Activated CD4-positive, alpha-beta memory T cell treated with anti-CD3 and anti-CD28 coated beads, Interleukin-2, amount 10 ng/mL, durations not matched to agents 7 days and 5 days (primary cell): ENCODE measurements at regions of chr3 and their contacts with region 1.

Region 1: DNA sequence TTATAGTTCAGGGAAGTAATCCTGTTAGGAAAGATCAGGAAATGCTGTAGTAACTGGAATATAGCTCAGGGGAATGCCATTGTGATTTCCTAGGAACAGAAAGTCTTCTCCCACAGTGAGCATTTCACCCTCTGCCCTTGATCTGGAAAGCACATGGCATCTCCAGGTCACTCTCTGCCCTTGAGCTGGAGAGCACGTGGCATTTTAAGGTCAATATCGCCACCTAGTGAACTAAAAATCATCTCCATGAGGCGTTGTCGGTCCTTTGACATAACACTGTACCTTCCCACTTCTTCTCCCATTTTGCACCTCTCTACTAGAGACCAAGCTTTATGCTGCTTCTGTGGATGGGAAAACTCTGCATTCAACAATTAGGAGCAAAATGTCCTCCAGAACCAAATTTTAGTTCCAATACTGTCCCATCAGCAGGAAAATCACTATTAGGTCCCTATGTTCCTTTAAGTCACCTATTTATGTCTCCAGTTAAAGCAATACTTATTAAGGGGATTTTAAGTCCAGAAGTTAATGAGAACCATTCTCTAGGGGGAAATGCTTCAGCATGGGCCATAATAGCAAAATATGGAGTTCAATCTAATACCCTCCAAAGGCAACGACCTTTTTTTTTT is 54.7 kb upstream of the GK5 start:
- DNase-seq: peak; percentile 46
- H3K4me3 Mint-ChIP-seq: no peak overlapping the region
- H3K27ac Mint-ChIP-seq: no peak overlapping the region
- H3K4me1 Mint-ChIP-seq: peaks cover 52% of the 10 kb centered on the region
- H3K27me3 Mint-ChIP-seq: no peaks in the 10 kb centered on the region

Region 2: DNA sequence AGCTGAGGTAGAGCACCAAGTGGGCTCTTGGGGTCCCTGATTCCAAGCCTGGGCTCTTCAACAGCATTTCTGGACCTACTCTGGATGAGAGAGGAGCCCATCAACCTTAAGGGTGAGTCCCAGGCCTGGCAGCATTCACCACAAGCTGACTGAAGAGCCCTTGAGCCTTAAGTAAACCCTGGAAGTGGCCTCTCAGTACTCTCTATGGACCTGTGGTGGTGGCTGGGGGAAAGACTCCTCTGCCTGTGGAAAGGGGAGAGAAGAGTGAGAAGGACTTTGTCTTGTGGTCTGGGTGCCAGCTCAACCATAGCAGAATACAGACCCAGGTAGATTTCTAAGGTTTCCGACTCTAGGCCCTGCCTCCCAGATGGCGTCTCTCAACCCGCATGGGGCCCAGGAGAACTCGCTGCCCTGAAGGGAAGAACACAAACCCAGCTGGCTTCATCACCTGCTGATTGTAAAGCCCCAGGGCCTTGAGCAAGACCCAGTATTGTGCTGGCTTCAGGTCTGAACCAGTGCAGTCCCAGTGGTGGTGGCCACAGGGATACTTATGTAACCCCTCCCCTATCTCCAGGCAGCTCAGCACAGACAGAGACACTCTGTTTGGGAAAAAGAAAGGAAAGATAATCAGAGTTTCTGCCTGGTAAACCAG is 202.1 kb before region 1 on chr3:
- CTCF ChIA-PET with region 1: no interaction called
- POLR2A ChIA-PET with region 1: no interaction called
- DNase-seq: no peak
- H3K4me3 Mint-ChIP-seq: no peak overlapping the region
- H3K27ac Mint-ChIP-seq: no peak overlapping the region
- H3K4me1 Mint-ChIP-seq: no peaks in the 10 kb centered on the region
- H3K27me3 Mint-ChIP-seq: no peaks in the 10 kb centered on the region

Region 3: DNA sequence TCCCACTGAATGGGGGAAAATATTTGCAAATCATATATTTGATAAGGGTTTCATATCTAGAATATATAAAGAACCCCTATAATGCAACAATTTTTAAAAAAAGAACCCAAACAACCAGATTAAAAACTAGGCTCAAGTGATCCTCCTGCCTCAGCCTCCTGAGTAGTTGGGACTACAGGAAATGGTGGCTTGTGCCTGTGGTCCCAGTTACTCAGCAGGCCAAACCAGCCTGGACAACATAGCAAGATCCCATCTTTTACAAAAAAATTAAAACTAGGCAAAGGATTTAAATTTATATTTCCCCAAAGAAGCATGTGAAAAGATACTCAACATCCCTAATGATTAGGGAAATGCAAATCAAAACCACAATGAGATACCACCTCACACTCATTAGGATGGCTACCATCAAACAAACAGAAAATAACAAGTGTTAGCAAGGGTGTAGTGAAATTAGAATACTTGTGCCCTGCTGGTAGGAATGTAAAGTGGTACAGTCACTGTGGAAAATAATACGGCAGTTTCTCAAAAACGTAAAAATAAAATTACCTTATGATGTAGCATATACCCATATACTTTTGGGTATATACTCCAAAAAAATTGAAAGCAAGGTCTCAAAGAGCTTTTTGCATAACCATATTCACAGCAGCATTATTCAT is 150.4 kb before region 1 on chr3:
- CTCF ChIA-PET with region 1: interaction called, 32 read pairs
- POLR2A ChIA-PET with region 1: interaction called, 4 read pairs
- DNase-seq: no peak
- H3K4me3 Mint-ChIP-seq: no peak overlapping the region
- H3K27ac Mint-ChIP-seq: no peak overlapping the region
- H3K4me1 Mint-ChIP-seq: peaks cover 2% of the 10 kb centered on the region
- H3K27me3 Mint-ChIP-seq: no peaks in the 10 kb centered on the region

Region 4: GRCh38 chr3:142180761-142181362 is 99.2 kb before region 1 on chr3:
- CTCF ChIA-PET with region 1: interaction called, 26 read pairs
- POLR2A ChIA-PET with region 1: no interaction called
- DNase-seq: peak; percentile 44
- H3K4me3 Mint-ChIP-seq: no peak overlapping the region
- H3K27ac Mint-ChIP-seq: no peak overlapping the region
- H3K4me1 Mint-ChIP-seq: no peaks in the 10 kb centered on the region
- H3K27me3 Mint-ChIP-seq: no peaks in the 10 kb centered on the region

Region 5: GRCh38 chr3:142618917-142619461 is 338.9 kb after region 1 on chr3:
- CTCF ChIA-PET with region 1: no interaction called
- POLR2A ChIA-PET with region 1: no interaction called
- DNase-seq: no peak
- H3K4me3 Mint-ChIP-seq: no peak overlapping the region
- H3K27ac Mint-ChIP-seq: no peak overlapping the region
- H3K4me1 Mint-ChIP-seq: no peaks in the 10 kb centered on the region
- H3K27me3 Mint-ChIP-seq: no peaks in the 10 kb centered on the region